ENCODE measurements at regions of chr6 and their contacts with region 1.

Region 1: GRCh38 chr6:18155150-18155863 is at the start of gene KDM1B:
- DNase-seq: peak; percentile 96
- ATAC-seq: peak; percentile 94
- H3K4me3 ChIP-seq: peak within 1 kb of the TSS; percentile 98 to 99 (median 99)
- H3K27ac ChIP-seq: peak within 1 kb of the TSS; percentile 89
- H3K4me1 ChIP-seq: peaks cover 29% of the 10 kb centered on the region
- H3K27me3 ChIP-seq: no peaks in the 10 kb centered on the region
- CTCF ChIP-seq: no peak
- EP300 ChIP-seq: no peak
- POLR2A ChIP-seq: peak in 1 of 2 experiments; percentile 68; a peak in 1 of 4 replicates
- RAD21 ChIP-seq: peak; percentile 17; the same call in 1 of the 2 replicates
- total RNA-seq, gene KDM1B: 13.2 and 22.1 TPM in 2 replicates

Region 2: GRCh38 chr6:17706580-17707370 is 448.5 kb before region 1 on chr6 and contains the start of gene NUP153:
- CTCF ChIA-PET with region 1: no interaction called
- POLR2A ChIA-PET with region 1: no interaction called
- in situ Hi-C with region 1: no loop called
- intact Hi-C with region 1: loop called (anchors 10 kb)
- DNase-seq: peak; percentile 98
- ATAC-seq: peak; percentile 85
- H3K4me3 ChIP-seq: peak within 1 kb of the TSS; percentile 79 to 86 (median 84)
- H3K27ac ChIP-seq: peak within 1 kb of the TSS; percentile 94
- H3K4me1 ChIP-seq: peaks cover 50% of the 10 kb centered on the region
- H3K27me3 ChIP-seq: no peaks in the 10 kb centered on the region; a peak in 1 of 5 replicates
- CTCF ChIP-seq: peak; percentile 43
- EP300 ChIP-seq: peak; percentile 62 to 85
- POLR2A ChIP-seq: peak; percentile 92 to 96
- RAD21 ChIP-seq: no peak; the same call in none of the 2 replicates
- total RNA-seq, gene NUP153: 55.2 and 93.0 TPM in 2 replicates

Region 3: DNA sequence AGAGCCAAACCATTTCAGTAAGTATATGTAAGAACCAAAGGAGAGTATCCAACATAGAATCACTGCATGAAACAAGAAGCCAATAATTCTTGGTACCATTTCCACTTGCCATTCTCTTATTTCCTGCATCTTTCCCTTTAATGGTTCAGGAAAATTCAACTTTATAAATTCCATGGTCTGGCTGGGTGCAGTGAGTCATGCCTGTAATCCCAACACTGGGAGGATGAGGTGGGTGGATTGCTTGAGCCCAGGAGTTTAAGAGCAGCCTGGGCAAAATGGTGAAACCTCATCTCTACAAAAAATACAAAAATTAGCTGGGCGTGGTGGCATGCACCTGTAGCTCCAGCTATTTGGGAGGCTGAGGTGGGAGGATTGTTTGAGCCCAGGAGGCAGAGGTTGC is 54.0 kb before region 1 on chr6:
- CTCF ChIA-PET with region 1: no interaction called
- POLR2A ChIA-PET with region 1: no interaction called
- in situ Hi-C with region 1: no loop called
- intact Hi-C with region 1: no loop called
- DNase-seq: no peak
- ATAC-seq: no peak
- H3K4me3 ChIP-seq: no peak overlapping the region
- H3K27ac ChIP-seq: no peak overlapping the region
- H3K4me1 ChIP-seq: no peaks in the 10 kb centered on the region
- H3K27me3 ChIP-seq: no peaks in the 10 kb centered on the region; a peak in 2 of 5 replicates
- CTCF ChIP-seq: no peak
- EP300 ChIP-seq: no peak
- POLR2A ChIP-seq: no peak
- RAD21 ChIP-seq: no peak

Region 4: DNA sequence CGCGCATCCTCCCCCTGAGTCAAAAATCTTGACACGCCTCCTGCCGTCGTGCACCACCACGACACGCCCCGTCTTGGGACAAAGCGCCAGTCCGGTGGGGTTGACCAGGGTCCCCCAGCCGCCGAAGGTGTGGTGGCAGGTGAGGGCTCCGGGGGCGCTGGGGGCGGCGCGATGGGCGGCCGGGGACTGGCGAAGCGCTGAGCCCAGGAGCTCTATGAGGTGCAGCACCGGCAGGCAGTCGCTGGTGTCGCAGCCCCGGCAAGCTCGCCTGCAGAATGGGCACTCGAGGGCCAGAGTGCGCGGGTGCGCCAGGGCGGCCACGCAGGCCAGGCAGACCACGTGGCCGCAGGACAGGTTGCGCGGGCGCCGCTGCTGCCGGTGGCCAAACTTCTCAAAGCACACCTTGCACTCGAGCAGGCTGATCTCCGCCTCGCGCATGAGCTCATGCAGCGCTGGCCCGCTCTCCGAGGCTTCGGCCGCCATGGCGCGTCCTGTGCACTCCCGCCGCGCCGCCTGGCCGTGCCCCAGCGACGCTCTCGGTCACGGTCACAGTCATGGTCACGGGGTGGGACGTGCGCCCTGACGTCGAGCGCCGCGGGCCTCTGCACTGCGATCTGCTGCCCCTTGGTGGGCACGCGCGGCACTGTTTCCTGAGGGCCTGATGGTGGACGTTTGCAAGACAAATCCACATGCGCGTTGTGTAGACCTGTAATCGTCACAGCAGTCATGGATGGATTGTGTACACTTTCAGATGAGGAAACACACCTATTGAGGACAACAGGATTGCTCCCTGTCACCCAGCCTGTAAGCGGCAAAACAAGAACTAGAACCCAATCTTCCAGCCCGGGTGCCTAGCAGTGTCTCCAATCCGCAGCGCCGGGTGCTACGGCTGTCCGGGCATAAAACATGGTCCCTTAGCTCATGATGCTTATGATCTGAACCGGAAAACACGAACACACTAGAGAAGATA is 32.9 kb before region 1 on chr6 and contains the start of gene NHLRC1:
- CTCF ChIA-PET with region 1: no interaction called
- POLR2A ChIA-PET with region 1: interaction called, 6 read pairs
- in situ Hi-C with region 1: no loop called
- intact Hi-C with region 1: loop called (anchors 2 kb)
- DNase-seq: peak; percentile 84
- ATAC-seq: peak; percentile 96
- H3K4me3 ChIP-seq: peak within 1 kb of the TSS; percentile 52 to 67 (median 52)
- H3K27ac ChIP-seq: no peak within 1 kb of the TSS
- H3K4me1 ChIP-seq: peaks cover 24% of the 10 kb centered on the region
- H3K27me3 ChIP-seq: no peaks in the 10 kb centered on the region; a peak in 1 of 5 replicates
- CTCF ChIP-seq: peak; percentile 100
- EP300 ChIP-seq: peak; percentile 36 to 56; a peak in 2 of 4 replicates
- POLR2A ChIP-seq: no peak; a peak in 1 of 4 replicates
- RAD21 ChIP-seq: peak; percentile 99
- total RNA-seq, gene NHLRC1: 0.11 and 0.20 TPM in 2 replicates

Region 5: DNA sequence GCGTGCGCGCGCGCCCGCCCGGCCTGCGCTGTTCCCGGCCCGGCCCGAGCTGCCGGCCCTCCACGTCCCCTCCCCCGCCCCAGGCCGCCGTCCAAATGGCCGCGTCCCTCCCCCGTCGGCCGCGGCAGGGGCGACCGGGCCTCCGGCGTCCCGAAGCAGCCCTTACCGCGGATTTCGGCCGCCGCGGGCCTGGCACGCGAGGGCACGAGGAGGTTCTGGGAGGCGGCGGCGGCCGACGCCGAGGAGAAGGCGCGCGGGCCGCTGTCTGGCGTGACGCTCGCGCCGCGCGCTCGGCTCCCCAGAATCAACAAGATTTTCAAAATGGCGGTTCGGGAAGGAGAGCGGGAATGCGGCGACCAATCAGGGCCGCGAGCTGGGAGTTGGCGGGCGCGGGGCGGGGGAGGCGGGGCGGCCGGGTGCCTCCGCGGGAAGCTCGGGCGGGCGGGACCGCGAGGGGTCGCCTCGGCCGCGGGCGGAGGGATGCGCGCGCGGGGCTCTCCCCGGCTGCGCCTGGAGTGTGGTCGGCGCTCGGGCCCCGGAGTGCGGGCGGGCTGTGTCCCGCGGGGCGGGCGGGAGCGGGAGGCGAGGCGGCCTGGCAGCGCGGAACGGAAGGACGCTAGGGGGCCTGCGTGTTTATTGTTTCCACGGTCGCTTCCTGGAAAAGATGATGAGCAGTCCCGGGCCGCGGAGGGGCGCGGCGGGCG is 109.1 kb after region 1 on chr6 and contains the start of gene DEK:
- CTCF ChIA-PET with region 1: no interaction called
- POLR2A ChIA-PET with region 1: interaction called, 3 read pairs
- in situ Hi-C with region 1: no loop called
- intact Hi-C with region 1: loop called (anchors 2 kb)
- DNase-seq: peak; percentile 84
- ATAC-seq: peak; percentile 88
- H3K4me3 ChIP-seq: peak within 1 kb of the TSS; percentile 80 to 95 (median 90)
- H3K27ac ChIP-seq: peak within 1 kb of the TSS; percentile 92
- H3K4me1 ChIP-seq: peaks cover 84% of the 10 kb centered on the region
- H3K27me3 ChIP-seq: no peaks in the 10 kb centered on the region; a peak in 1 of 5 replicates
- CTCF ChIP-seq: peak; percentile 75
- EP300 ChIP-seq: no peak
- POLR2A ChIP-seq: peak; percentile 45 to 72
- RAD21 ChIP-seq: peak; percentile 27; the same call in 1 of the 2 replicates
- total RNA-seq, gene DEK: 276 and 337 TPM in 2 replicates

Region 6: GRCh38 chr6:18387061-18387721 is 231.9 kb after region 1 on chr6 and contains the start of gene RNF144B:
- CTCF ChIA-PET with region 1: no interaction called
- POLR2A ChIA-PET with region 1: no interaction called
- in situ Hi-C with region 1: no loop called
- intact Hi-C with region 1: loop called (anchors 2 kb)
- DNase-seq: peak; percentile 94
- ATAC-seq: peak; percentile 95
- H3K4me3 ChIP-seq: peak within 1 kb of the TSS; percentile 71 to 81 (median 73)
- H3K27ac ChIP-seq: peak within 1 kb of the TSS; percentile 52
- H3K4me1 ChIP-seq: peaks cover 61% of the 10 kb centered on the region
- H3K27me3 ChIP-seq: no peaks in the 10 kb centered on the region; a peak in 2 of 5 replicates
- CTCF ChIP-seq: peak; percentile 34; the same call in 1 of the 2 replicates
- EP300 ChIP-seq: no peak; a peak in 1 of 4 replicates
- POLR2A ChIP-seq: peak; percentile 58 to 76
- RAD21 ChIP-seq: peak; percentile 46
- total RNA-seq, gene RNF144B: 4.3 and 5.3 TPM in 2 replicates